ENCODE measurements at regions of chr5 and their contacts with region 1.

Region 1: GRCh38 chr5:98773464-98774191 is at the start of gene RGMB:
- DNase-seq: peak; percentile 99
- H3K4me3 ChIP-seq: peak within 1 kb of the TSS; percentile 84 to 98 (median 87)
- H3K27ac ChIP-seq: peak within 1 kb of the TSS; percentile 76
- H3K4me1 ChIP-seq: peaks cover 35% of the 10 kb centered on the region
- H3K27me3 ChIP-seq: no peaks in the 10 kb centered on the region
- CTCF ChIP-seq: no peak
- POLR2A ChIP-seq: peak; percentile 92
- total RNA-seq, gene RGMB: 27.5 and 31.3 TPM in 2 replicates

Region 2: GRCh38 chr5:96934708-96935558 is 1838.7 kb before region 1 on chr5:
- CTCF ChIA-PET with region 1: no interaction called
- POLR2A ChIA-PET with region 1: no interaction called
- dilution Hi-C with region 1: no loop called
- intact Hi-C with region 1: loop called (anchors 10 kb)
- DNase-seq: peak; percentile 94
- H3K4me3 ChIP-seq: peak overlapping the region; percentile 30 to 97 (median 85)
- H3K27ac ChIP-seq: peak overlapping the region; percentile 82
- H3K4me1 ChIP-seq: peaks cover 21% of the 10 kb centered on the region
- H3K27me3 ChIP-seq: no peaks in the 10 kb centered on the region
- CTCF ChIP-seq: no peak
- POLR2A ChIP-seq: peak; percentile 95

Region 3: DNA sequence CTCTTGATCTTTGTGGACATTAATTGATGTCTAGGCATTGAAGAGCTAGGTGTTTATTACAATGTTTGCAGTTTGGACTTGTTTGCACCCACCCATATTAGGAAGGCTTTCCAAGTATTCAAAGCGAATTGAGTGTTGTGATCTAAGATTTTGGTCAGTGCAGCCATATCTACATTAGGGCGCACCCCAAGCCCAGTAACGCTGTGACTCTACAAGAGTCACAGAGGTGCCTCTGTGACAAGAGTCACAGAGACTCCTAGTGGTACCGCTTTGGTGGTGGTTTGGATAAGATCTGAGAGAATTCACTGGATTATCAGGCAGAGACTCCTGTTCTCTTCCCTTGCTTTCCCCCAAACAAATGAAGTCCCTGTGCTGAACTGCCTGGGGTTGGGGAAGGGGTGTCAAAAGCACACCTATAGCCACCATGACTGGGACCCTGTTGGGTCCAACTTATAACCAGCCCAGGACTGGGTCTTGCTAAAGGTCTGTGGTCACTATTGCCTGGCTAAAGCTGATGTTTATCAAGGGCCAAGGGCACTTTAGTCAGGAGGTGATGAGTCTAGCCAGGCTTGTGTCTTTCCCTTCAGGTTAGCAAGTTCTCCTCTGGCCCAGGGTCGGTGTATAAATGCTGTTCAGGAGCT is 1476.4 kb before region 1 on chr5:
- CTCF ChIA-PET with region 1: no interaction called
- POLR2A ChIA-PET with region 1: no interaction called
- dilution Hi-C with region 1: no loop called
- intact Hi-C with region 1: loop called (anchors 2 kb)
- DNase-seq: peak; percentile 43
- H3K4me3 ChIP-seq: no peak overlapping the region
- H3K27ac ChIP-seq: no peak overlapping the region
- H3K4me1 ChIP-seq: no peaks in the 10 kb centered on the region
- H3K27me3 ChIP-seq: no peaks in the 10 kb centered on the region
- CTCF ChIP-seq: peak; percentile 40 to 47
- POLR2A ChIP-seq: no peak

Region 4: DNA sequence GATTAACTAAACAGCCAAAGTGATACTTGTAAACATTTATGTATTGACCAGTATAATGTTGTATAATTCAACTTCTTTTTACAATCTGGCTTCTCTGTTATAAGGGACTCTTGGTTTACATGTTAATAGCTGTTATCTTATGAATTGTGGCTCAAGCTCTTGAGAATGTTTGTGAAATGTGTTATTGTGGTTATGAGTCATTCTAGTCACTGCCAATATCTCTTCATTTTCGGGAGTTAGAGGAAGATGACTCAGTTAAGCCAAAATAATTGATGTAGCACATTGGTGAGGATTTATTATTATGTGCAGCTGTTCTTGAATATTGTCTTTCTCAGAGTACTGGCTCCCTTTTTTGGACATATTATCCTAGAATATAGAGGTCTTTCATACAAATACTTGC is 935.4 kb before region 1 on chr5:
- CTCF ChIA-PET with region 1: interaction called, 10 read pairs
- POLR2A ChIA-PET with region 1: no interaction called
- dilution Hi-C with region 1: no loop called
- intact Hi-C with region 1: loop called (anchors 1 kb)
- DNase-seq: peak; percentile 96
- H3K4me3 ChIP-seq: no peak overlapping the region
- H3K27ac ChIP-seq: peak overlapping the region; percentile 92
- H3K4me1 ChIP-seq: peaks cover 46% of the 10 kb centered on the region
- H3K27me3 ChIP-seq: no peaks in the 10 kb centered on the region
- CTCF ChIP-seq: no peak
- POLR2A ChIP-seq: peak; percentile 47

Region 5: GRCh38 chr5:98309785-98310598 is 463.6 kb before region 1 on chr5:
- CTCF ChIA-PET with region 1: interaction called, 19 read pairs
- POLR2A ChIA-PET with region 1: no interaction called
- dilution Hi-C with region 1: no loop called
- intact Hi-C with region 1: loop called (anchors 1 kb)
- DNase-seq: peak; percentile 95
- H3K4me3 ChIP-seq: peak overlapping the region in 2 of 3 experiments; percentile 10 to 72
- H3K27ac ChIP-seq: peak overlapping the region; percentile 97
- H3K4me1 ChIP-seq: peaks cover 63% of the 10 kb centered on the region
- H3K27me3 ChIP-seq: no peaks in the 10 kb centered on the region
- CTCF ChIP-seq: no peak
- POLR2A ChIP-seq: no peak

Region 6: DNA sequence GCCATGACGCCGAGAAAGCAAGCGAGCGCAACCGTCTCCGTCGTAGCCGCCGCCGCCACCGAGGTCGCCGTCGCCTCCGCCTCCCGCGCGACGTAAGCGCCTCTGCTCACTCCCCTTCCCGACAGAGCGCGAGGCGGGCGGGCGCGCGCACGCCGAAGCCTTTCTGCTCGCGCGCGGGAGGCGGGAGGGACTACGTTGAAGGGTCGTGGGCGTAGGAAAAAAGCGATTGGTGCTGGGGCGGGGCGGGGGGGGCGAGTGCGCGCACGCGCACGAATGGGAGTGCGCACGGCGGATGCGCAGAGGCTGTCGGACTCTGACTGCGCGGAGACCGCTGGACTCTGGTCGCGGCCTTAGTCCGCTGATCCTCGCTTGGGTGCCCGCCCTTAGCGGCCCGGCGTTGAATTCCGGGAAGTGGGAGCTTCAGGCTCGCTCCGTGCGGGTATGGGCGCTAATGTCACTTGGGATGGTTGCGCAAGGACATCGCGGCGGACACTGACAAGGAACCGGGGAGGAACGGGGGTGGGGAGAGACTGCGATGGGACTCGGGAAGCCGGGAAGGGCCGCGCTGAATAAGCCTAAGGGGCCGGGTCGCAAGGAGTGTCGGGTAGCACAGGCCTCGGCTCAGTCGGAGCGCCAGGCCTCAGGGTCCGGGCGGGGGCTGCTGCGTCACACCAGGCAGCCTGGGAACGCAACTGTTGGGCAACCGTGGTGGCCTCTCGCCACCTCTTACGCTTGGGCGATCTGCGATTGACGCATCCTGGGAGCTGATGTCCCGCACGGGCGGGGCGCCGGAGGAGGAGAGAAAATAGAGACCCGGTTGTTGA is 155.5 kb after region 1 on chr5 and contains the start of gene CHD1:
- CTCF ChIA-PET with region 1: no interaction called
- POLR2A ChIA-PET with region 1: no interaction called
- dilution Hi-C with region 1: no loop called
- intact Hi-C with region 1: loop called (anchors 1 kb)
- DNase-seq: peak; percentile 97
- H3K4me3 ChIP-seq: peak within 1 kb of the TSS; percentile 63 to 86 (median 81)
- H3K27ac ChIP-seq: peak within 1 kb of the TSS; percentile 95
- H3K4me1 ChIP-seq: peaks cover 18% of the 10 kb centered on the region
- H3K27me3 ChIP-seq: no peaks in the 10 kb centered on the region
- CTCF ChIP-seq: no peak
- POLR2A ChIP-seq: peak; percentile 89
- total RNA-seq, gene CHD1: 44.3 and 48.9 TPM in 2 replicates

Region 7: DNA sequence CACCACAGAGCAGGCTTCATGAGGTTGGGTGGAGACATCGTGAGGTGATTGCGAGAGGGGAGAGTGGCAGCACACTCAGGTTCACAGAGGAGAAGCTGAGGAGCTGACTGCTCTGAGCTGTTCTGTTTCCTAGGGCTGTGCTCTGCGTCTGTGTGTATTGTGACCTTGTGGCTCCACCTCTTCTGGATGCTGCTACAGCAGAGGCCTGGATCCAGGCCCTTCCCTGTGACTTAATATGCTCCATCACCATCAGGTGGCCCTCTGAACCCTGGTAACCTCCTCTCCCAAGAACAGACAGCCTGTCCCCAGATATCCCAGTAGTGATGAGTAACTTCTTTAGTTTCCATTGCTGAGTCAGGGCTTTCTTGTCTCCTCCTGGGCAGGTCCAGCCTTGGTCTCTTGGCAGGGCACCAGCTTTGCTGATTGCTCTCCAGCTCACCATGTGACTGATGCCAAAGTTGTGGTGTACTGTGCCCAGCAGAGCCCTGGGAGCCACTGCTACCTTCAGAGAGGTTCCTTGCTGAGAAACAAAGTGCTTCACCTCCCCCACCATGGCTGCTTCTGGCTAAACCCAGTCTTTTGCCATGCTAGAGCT is 368.0 kb after region 1 on chr5:
- CTCF ChIA-PET with region 1: no interaction called
- POLR2A ChIA-PET with region 1: no interaction called
- dilution Hi-C with region 1: no loop called
- intact Hi-C with region 1: no loop called
- DNase-seq: no peak
- H3K4me3 ChIP-seq: no peak overlapping the region
- H3K27ac ChIP-seq: no peak overlapping the region
- H3K4me1 ChIP-seq: no peaks in the 10 kb centered on the region
- H3K27me3 ChIP-seq: no peaks in the 10 kb centered on the region
- CTCF ChIP-seq: no peak
- POLR2A ChIP-seq: no peak

Measured in endothelial cell of umbilical vein (primary cell).